ENCODE measurements at regions of chr1 and their contacts with region 1.

Region 1: DNA sequence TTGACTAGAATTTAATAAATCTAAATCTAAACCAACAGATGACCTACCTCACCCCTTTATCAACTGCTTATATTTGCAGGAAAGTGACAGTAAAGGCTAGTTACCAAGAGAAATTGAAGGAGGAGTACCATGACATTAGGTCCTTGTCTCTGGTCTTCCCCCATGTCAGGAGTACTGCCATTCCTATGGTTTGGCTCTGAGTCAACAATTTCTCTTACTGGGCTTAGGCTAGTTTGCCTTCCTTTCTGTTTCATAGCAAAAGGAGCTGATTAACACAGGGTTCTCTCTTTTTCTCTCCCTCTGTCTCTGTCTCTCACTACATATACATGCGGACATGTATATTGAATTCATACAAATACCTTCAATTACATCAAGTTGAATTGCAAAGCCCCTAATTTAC is 579.9 kb downstream of the DPYD start:
- DNase-seq: no peak
- ATAC-seq: no peak
- H3K4me3 ChIP-seq: no peak overlapping the region
- H3K4me3 Mint-ChIP-seq: no peak overlapping the region
- H3K27ac ChIP-seq: no peak overlapping the region
- H3K27ac Mint-ChIP-seq: no peak overlapping the region
- H3K4me1 ChIP-seq: no peaks in the 10 kb centered on the region
- H3K4me1 Mint-ChIP-seq: no peaks in the 10 kb centered on the region
- H3K27me3 ChIP-seq: no peaks in the 10 kb centered on the region
- H3K27me3 Mint-ChIP-seq: no peaks in the 10 kb centered on the region

Region 2: GRCh38 chr1:97593192-97593591 is 252.2 kb after region 1 on chr1:
- CTCF ChIA-PET with region 1: no interaction called
- POLR2A ChIA-PET with region 1: interaction called in 1 of 2 experiments, 10 read pairs
- DNase-seq: no peak
- ATAC-seq: no peak
- H3K4me3 ChIP-seq: no peak overlapping the region
- H3K4me3 Mint-ChIP-seq: no peak overlapping the region
- H3K27ac ChIP-seq: no peak overlapping the region
- H3K27ac Mint-ChIP-seq: no peak overlapping the region
- H3K4me1 ChIP-seq: no peaks in the 10 kb centered on the region
- H3K4me1 Mint-ChIP-seq: no peaks in the 10 kb centered on the region
- H3K27me3 ChIP-seq: no peaks in the 10 kb centered on the region
- H3K27me3 Mint-ChIP-seq: no peaks in the 10 kb centered on the region

Measured in T-cell (primary cell).